Activated B cell treated with CpG ODN at 0.5 μM for 24 hours (primary cell): ENCODE measurements at regions of chr1 and their contacts with region 1.

Region 1: DNA sequence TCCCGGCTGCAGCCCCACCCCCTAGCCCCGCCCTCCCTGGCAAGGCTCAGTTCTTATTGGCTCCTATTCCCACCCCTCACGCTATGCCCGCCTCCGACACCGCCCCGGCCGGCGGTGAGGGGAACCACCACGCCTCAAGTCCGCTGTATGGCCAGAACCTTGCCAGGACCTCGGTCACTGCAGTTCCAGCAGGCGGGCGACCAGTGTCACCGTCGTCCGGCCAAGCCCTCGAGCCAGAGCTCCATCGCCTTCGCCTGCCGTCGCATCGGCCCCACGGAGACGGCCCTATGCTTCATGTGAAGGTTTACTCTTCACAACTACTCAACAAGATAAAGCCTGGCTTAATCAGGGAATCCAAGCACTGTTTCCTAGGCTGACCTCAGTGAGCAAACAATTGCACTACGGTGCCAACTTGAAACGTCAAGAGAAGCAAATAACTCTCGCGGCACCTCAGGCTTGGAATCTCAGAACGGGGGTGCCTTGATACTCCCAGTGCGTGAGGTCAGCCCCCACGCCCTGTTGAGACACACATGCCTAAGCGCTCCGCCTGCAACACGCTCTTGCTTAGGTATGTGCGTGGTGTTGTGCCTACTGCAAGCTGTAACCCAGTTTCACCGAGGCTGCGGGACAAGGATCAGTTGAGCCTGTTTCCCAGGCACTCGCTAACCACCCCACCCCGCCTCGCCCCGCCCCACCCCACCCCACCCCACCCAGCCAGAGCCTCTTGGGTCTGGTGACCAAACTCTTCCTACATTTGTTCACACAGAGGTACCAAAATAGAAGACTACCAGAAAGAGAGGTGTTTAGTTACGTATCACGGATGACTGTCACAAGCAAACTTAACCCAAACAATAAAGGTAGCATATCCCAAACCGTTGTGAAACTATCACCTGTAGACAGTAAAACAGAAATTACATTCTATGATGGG is 498 bp upstream of the DENND2C start:
- DNase-seq: peak; percentile 80
- ATAC-seq: peak; percentile 99
- H3K4me3 Mint-ChIP-seq: peak overlapping the region; percentile 94
- H3K27ac Mint-ChIP-seq: peak overlapping the region; percentile 67
- H3K4me1 Mint-ChIP-seq: peaks cover 10% of the 10 kb centered on the region
- H3K27me3 Mint-ChIP-seq: peaks cover 30% of the 10 kb centered on the region
- CTCF ChIP-seq: no peak

Region 2: GRCh38 chr1:114707604-114708003 is 37.3 kb after region 1 on chr1:
- CTCF ChIA-PET with region 1: no interaction called
- POLR2A ChIA-PET with region 1: no interaction called
- intact Hi-C with region 1: no loop called
- DNase-seq: no peak
- ATAC-seq: no peak
- H3K4me3 Mint-ChIP-seq: no peak overlapping the region
- H3K27ac Mint-ChIP-seq: no peak overlapping the region
- H3K4me1 Mint-ChIP-seq: peaks cover 5% of the 10 kb centered on the region
- H3K27me3 Mint-ChIP-seq: no peaks in the 10 kb centered on the region
- CTCF ChIP-seq: no peak

Region 3: GRCh38 chr1:114780344-114781226 is 110.2 kb after region 1 on chr1 and contains the start of gene SIKE1:
- CTCF ChIA-PET with region 1: no interaction called
- POLR2A ChIA-PET with region 1: no interaction called
- intact Hi-C with region 1: loop called (anchors 1 kb)
- DNase-seq: peak; percentile 80
- ATAC-seq: peak; percentile 97
- H3K4me3 Mint-ChIP-seq: peak within 1 kb of the TSS; percentile 100
- H3K27ac Mint-ChIP-seq: peak within 1 kb of the TSS; percentile 97
- H3K4me1 Mint-ChIP-seq: peaks cover 28% of the 10 kb centered on the region
- H3K27me3 Mint-ChIP-seq: peaks cover 7% of the 10 kb centered on the region
- CTCF ChIP-seq: no peak
- total RNA-seq, gene SIKE1: 38.4 and 44.2 TPM in 2 replicates